ENCODE measurements at regions of chrX and their contacts with region 1.

Region 1: DNA sequence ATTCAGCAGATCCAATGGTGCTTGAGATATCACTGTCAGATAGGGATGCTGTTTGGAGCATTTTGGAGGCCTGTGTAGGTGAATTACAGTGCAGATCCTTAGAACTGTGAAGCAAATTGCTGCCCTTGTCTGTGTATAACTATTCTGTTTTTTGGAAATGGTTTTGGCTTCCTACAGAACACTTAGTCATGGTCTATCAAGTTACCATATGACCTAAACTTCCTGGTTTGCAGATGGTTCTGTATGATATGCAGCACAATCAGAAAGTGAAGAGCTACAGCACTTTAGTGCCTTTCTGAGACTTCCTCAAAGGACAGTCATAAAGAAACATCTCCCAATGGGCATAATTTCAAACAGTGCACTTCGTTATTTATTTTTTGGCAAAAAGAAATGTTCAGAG is 688.6 kb downstream of the SH3BGRL start:
- DNase-seq: no peak
- H3K4me3 ChIP-seq: no peak overlapping the region
- H3K27ac ChIP-seq: no peak overlapping the region
- H3K4me1 ChIP-seq: peaks cover 0 to 3% of the 10 kb centered on the region in 2 donors
- H3K27me3 ChIP-seq: peaks cover 0 to 26% of the 10 kb centered on the region in 2 donors
- CTCF ChIP-seq: no peak
- POLR2A ChIP-seq: no peak

Region 2: DNA sequence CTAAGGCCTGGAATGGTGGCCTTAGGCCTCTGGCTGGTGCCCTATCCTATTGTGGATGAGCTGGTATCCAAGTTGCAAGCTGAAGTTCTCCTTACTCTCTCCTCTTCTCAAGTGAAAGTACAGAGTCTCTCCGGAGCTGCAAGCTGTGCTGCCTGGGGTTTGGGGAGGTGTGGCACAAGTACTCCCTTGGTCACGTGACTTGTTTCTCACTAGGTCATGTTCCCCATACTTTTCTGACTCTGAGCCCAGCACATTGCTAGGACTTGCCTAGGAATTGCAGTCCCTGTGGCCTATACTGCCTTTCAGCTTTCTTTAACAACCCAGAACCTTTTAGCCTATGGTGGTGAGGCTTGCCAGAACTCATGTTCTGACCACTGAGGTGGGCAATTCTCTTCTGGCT is 72.1 kb before region 1 on chrX:
- intact Hi-C with region 1: no loop called
- DNase-seq: no peak
- H3K4me3 ChIP-seq: no peak overlapping the region
- H3K27ac ChIP-seq: no peak overlapping the region
- H3K4me1 ChIP-seq: no peaks in the 10 kb centered on the region
- H3K27me3 ChIP-seq: peaks cover 0 to 14% of the 10 kb centered on the region in 2 donors
- CTCF ChIP-seq: no peak
- POLR2A ChIP-seq: no peak

Region 3: GRCh38 chrX:83333813-83334212 is 1443.3 kb after region 1 on chrX:
- intact Hi-C with region 1: loop called (anchors 5 kb)
- DNase-seq: no peak
- H3K4me3 ChIP-seq: no peak overlapping the region
- H3K27ac ChIP-seq: no peak overlapping the region
- H3K4me1 ChIP-seq: no peaks in the 10 kb centered on the region
- H3K27me3 ChIP-seq: peaks cover 0 to 27% of the 10 kb centered on the region in 2 donors
- CTCF ChIP-seq: no peak
- POLR2A ChIP-seq: no peak